Mammary epithelial cell (primary cell): ENCODE measurements at regions of chr3 and their contacts with region 1.

Region 1: DNA sequence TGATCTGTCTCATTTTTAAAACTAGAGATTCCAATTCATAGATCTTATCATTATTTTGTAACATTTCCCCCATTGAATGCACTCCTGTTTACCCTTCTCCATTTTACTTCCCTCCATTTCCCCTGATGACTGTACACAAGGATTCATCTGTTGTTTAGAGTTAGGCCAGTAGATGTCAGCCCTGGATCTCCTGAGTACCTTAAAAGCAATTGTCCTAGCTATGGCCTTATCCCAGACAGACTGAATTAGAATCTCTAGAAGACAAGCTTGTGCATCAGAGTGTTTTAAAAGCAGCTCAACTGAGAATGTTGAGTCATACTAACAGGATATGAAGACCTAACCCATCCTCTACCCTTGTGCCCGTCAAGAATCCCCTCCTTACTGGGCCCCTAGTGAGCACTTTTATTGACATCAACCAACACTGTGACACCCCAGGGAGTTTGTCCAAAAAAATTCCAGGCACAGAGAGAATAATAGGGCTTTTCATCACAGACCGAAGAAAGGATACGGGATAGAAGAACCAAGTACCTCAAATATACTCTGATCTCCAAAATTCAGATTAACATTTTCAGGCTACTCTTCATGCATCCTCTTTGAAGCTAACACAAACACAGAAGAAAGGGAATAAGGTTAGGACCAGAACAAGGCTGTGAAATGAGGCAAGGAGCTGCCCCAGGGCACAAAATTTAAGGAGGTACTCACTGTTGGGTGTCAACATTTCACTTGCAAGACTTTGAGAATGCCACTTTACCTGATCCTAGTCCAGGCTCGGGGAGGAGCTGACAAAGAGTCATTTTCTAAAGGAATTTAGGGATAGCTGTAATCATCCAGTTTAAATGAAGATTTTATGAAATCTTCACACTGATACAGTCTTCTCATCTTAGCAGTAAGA is 17.1 kb downstream of the ZBED2 start:
- DNase-seq: peak; percentile 80
- H3K4me3 ChIP-seq: no peak overlapping the region
- H3K27ac ChIP-seq: peak overlapping the region; percentile 40
- H3K4me1 ChIP-seq: peaks cover 30% of the 10 kb centered on the region
- H3K27me3 ChIP-seq: no peaks in the 10 kb centered on the region
- CTCF ChIP-seq: peak; percentile 72 to 85

Region 2: GRCh38 chr3:109985943-109986555 is 1592.0 kb before region 1 on chr3:
- CTCF ChIA-PET with region 1: no interaction called
- dilution Hi-C with region 1: no loop called
- in situ Hi-C with region 1: no loop called
- intact Hi-C with region 1: no loop called
- DNase-seq: peak; percentile 66
- H3K4me3 ChIP-seq: no peak overlapping the region
- H3K27ac ChIP-seq: no peak overlapping the region
- H3K4me1 ChIP-seq: no peaks in the 10 kb centered on the region
- H3K27me3 ChIP-seq: no peaks in the 10 kb centered on the region
- CTCF ChIP-seq: no peak

Region 3: GRCh38 chr3:111594205-111594604 is 16.2 kb after region 1 on chr3:
- CTCF ChIA-PET with region 1: no interaction called
- dilution Hi-C with region 1: no loop called
- in situ Hi-C with region 1: no loop called
- intact Hi-C with region 1: loop called (anchors 1 kb)
- DNase-seq: peak; percentile 89
- H3K4me3 ChIP-seq: peak overlapping the region; percentile 32 to 71 (median 69)
- H3K27ac ChIP-seq: peak overlapping the region; percentile 96
- H3K4me1 ChIP-seq: peaks cover 52% of the 10 kb centered on the region
- H3K27me3 ChIP-seq: no peaks in the 10 kb centered on the region
- CTCF ChIP-seq: no peak

Region 4: GRCh38 chr3:111616417-111617105 is 38.5 kb after region 1 on chr3:
- CTCF ChIA-PET with region 1: interaction called, 29 read pairs
- dilution Hi-C with region 1: loop called (anchors 5 kb)
- in situ Hi-C with region 1: no loop called
- intact Hi-C with region 1: loop called (anchors 1 kb)
- DNase-seq: peak; percentile 65
- H3K4me3 ChIP-seq: no peak overlapping the region
- H3K27ac ChIP-seq: no peak overlapping the region
- H3K4me1 ChIP-seq: peaks cover 20% of the 10 kb centered on the region
- H3K27me3 ChIP-seq: no peaks in the 10 kb centered on the region
- CTCF ChIP-seq: peak; percentile 51 to 66

Region 5: DNA sequence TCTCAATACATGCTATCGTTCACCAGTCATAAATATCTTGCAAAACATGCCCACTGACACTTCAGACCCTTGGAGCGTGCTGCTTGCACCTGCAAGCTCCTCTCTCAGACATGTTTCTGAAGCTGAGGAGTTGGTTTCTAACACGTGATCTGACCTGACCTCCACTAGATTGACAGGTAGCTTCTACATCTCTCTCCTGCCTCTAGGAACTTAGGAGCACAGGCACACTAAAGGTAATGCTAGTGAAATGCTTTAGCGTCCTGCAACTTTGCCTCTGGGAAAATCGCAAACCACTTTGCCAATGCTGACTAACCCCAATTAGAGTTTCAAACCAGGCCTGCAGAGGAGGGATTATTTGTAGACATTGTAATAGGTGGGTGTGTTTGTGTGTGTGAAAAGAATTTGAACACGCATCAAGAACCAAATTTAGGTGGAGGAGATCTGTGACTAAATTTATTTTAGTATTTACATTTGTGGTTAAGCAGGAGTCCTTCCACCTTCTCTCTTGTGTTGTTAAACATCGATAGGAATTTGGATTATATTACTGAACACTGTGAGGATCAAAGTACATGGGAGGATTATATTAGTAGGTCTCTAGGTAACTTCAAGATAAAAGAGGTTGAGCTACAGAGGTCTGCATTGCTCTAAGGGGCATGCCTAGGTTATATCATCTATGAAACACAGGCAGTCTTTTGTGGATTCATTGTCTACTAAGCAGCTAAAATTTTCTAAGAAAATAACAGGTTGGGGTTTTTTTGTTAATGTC is 103.8 kb after region 1 on chr3:
- CTCF ChIA-PET with region 1: no interaction called
- dilution Hi-C with region 1: no loop called
- in situ Hi-C with region 1: loop called in 1 of 2 experiments (anchors 10 kb)
- intact Hi-C with region 1: no loop called
- DNase-seq: no peak
- H3K4me3 ChIP-seq: no peak overlapping the region
- H3K27ac ChIP-seq: no peak overlapping the region
- H3K4me1 ChIP-seq: peaks cover 11% of the 10 kb centered on the region
- H3K27me3 ChIP-seq: no peaks in the 10 kb centered on the region
- CTCF ChIP-seq: no peak

Region 6: DNA sequence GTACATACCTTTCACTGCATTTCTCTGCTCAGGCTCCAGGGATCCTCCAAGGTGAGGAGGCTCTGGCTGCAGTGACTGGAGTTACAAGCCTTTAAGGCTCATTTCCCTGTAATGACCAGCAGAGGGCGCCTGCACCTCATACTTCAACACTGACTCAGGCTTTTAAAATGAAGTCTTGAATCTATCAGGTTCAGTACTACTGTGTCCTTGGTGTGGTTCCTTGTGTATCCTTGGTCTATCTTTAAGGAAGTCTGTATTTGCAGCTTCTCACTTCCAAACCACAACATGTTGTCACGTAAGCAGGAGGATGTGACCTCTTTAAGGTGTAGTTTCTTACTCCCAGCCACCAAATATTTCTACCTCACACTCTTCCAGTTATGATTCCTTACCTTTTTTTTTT is 139.6 kb after region 1 on chr3:
- CTCF ChIA-PET with region 1: interaction called, 13 read pairs
- dilution Hi-C with region 1: no loop called
- in situ Hi-C with region 1: no loop called
- intact Hi-C with region 1: loop called (anchors 1 kb)
- DNase-seq: peak; percentile 88
- H3K4me3 ChIP-seq: no peak overlapping the region
- H3K27ac ChIP-seq: peak overlapping the region; percentile 33
- H3K4me1 ChIP-seq: peaks cover 18% of the 10 kb centered on the region
- H3K27me3 ChIP-seq: no peaks in the 10 kb centered on the region
- CTCF ChIP-seq: peak; percentile 90 to 92

Region 7: GRCh38 chr3:111967651-111968274 is 389.7 kb after region 1 on chr3:
- CTCF ChIA-PET with region 1: no interaction called
- dilution Hi-C with region 1: no loop called
- in situ Hi-C with region 1: no loop called
- intact Hi-C with region 1: loop called (anchors 5 kb)
- DNase-seq: peak; percentile 58
- H3K4me3 ChIP-seq: no peak overlapping the region
- H3K27ac ChIP-seq: no peak overlapping the region
- H3K4me1 ChIP-seq: peaks cover 16% of the 10 kb centered on the region
- H3K27me3 ChIP-seq: no peaks in the 10 kb centered on the region
- CTCF ChIP-seq: peak; percentile 85 to 86